K562 (cell line): ENCODE measurements at regions of chr22 and their contacts with region 1.

Region 1: DNA sequence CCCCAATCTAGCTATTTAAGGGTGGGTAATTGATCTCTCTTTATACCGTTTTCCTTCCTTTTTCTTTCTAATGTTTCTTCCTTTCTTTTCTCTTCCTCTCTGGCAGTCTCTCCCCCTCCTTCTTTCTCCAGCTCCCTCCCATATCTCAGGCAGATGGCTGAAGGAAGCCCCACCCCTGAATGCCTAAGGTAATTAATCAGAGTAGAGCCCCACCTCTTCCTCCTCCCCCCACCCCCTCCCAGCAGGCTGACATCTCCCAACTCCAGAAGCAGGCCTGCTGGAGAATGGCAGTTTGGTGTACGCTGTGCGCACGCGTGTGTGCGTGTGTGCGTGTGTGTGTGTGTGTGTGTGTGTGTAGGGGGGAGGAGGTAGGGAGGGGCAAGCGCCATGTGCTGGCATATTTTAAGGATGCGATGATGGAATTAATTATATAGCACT is 122.6 kb downstream of the APOL5 start:
- DNase-seq: peak; percentile 83 to 92 (median 85)
- ATAC-seq: peak; percentile 98
- H3K4me3 ChIP-seq: peak overlapping the region; percentile 38
- H3K27ac ChIP-seq: no peak overlapping the region
- H3K4me1 ChIP-seq: peaks cover 3 to 13% of the 10 kb centered on the region in 2 experiments; a peak in 2 of 5 replicates
- H3K27me3 ChIP-seq: no peaks in the 10 kb centered on the region
- CTCF ChIP-seq: no peak
- EP300 ChIP-seq: peak; percentile 20; the same call in 1 of the 2 replicates
- POLR2A ChIP-seq: no peak
- RAD21 ChIP-seq: no peak

Region 2: DNA sequence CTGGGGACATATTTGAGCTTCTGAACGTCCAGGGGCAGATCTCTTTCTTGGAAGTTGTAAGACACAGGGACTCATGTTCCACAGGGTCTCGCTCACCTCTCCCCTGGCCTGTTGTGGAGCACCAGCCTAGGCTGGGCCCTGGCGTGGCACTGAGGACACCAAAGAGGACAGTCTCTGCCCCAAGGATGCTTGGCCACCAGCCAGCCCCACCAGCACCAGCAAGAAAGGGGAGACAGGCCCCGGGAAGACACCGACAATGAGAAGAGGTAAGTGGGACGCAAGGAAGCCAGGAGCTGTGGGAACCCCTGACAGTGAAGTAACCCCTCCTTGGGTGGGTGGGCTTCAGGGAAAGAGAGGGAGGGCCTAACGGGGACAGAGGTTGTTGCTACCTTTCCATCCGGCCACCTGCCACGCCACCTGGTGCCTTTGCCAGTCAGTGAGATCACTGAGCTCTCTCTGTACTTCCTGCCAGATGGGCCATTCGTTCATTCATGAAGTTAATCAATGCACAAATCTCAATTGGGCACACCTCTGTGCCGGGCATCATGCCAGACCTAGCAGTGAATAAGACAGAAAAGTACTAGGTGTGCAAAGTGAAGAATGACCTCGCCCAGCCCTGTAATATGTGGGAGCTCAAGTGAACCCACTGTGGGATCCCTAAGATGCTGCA is 111.5 kb before region 1 on chr22:
- CTCF ChIA-PET with region 1: no interaction called
- POLR2A ChIA-PET with region 1: no interaction called
- in situ Hi-C with region 1: no loop called
- intact Hi-C with region 1: loop called (anchors 10 kb)
- DNase-seq: no peak
- ATAC-seq: no peak
- H3K4me3 ChIP-seq: no peak overlapping the region
- H3K27ac ChIP-seq: no peak overlapping the region
- H3K4me1 ChIP-seq: peaks cover 6 to 9% of the 10 kb centered on the region in 2 experiments
- H3K27me3 ChIP-seq: peaks cover 10 to 18% of the 10 kb centered on the region in 2 experiments; a peak in 4 of 5 replicates
- CTCF ChIP-seq: no peak
- EP300 ChIP-seq: no peak
- POLR2A ChIP-seq: no peak
- RAD21 ChIP-seq: no peak

Region 3: GRCh38 chr22:35785181-35785923 is 55.0 kb before region 1 on chr22:
- CTCF ChIA-PET with region 1: no interaction called
- POLR2A ChIA-PET with region 1: no interaction called
- in situ Hi-C with region 1: no loop called
- intact Hi-C with region 1: no loop called
- DNase-seq: no peak
- ATAC-seq: no peak
- H3K4me3 ChIP-seq: no peak overlapping the region
- H3K27ac ChIP-seq: no peak overlapping the region
- H3K4me1 ChIP-seq: no peaks in the 10 kb centered on the region; a peak in 2 of 5 replicates
- H3K27me3 ChIP-seq: no peaks in the 10 kb centered on the region
- CTCF ChIP-seq: no peak
- EP300 ChIP-seq: no peak
- POLR2A ChIP-seq: no peak
- RAD21 ChIP-seq: no peak

Region 4: GRCh38 chr22:35914665-35915476 is 74.5 kb after region 1 on chr22:
- CTCF ChIA-PET with region 1: no interaction called
- POLR2A ChIA-PET with region 1: no interaction called
- in situ Hi-C with region 1: no loop called
- intact Hi-C with region 1: loop called (anchors 10 kb)
- DNase-seq: peak; percentile 50 to 76 (median 62)
- ATAC-seq: peak; percentile 98
- H3K4me3 ChIP-seq: 0 out of 2 replicates have a peak overlapping the region, but pooled peaks have one; percentile 16
- H3K27ac ChIP-seq: peak overlapping the region; percentile 23; the same call in 1 of the 3 replicates
- H3K4me1 ChIP-seq: peaks cover 0 to 13% of the 10 kb centered on the region in 2 experiments; a peak in 2 of 5 replicates
- H3K27me3 ChIP-seq: no peaks in the 10 kb centered on the region
- CTCF ChIP-seq: no peak
- EP300 ChIP-seq: no peak
- POLR2A ChIP-seq: no peak
- RAD21 ChIP-seq: no peak